ENCODE measurements at regions of chr6 and their contacts with region 1.

Region 1: GRCh38 chr6:38671885-38672467 is 31.0 kb downstream of the GLO1 start:
- DNase-seq: peak; percentile 55
- ATAC-seq: peak; percentile 91
- H3K4me3 ChIP-seq: no peak overlapping the region
- H3K27ac ChIP-seq: no peak overlapping the region
- H3K4me1 ChIP-seq: peaks cover 18% of the 10 kb centered on the region
- H3K27me3 ChIP-seq: no peaks in the 10 kb centered on the region
- CTCF ChIP-seq: peak; percentile 70 to 84 (median 81)
- EP300 ChIP-seq: no peak
- POLR2A ChIP-seq: no peak
- RAD21 ChIP-seq: peak; percentile 86

Region 2: DNA sequence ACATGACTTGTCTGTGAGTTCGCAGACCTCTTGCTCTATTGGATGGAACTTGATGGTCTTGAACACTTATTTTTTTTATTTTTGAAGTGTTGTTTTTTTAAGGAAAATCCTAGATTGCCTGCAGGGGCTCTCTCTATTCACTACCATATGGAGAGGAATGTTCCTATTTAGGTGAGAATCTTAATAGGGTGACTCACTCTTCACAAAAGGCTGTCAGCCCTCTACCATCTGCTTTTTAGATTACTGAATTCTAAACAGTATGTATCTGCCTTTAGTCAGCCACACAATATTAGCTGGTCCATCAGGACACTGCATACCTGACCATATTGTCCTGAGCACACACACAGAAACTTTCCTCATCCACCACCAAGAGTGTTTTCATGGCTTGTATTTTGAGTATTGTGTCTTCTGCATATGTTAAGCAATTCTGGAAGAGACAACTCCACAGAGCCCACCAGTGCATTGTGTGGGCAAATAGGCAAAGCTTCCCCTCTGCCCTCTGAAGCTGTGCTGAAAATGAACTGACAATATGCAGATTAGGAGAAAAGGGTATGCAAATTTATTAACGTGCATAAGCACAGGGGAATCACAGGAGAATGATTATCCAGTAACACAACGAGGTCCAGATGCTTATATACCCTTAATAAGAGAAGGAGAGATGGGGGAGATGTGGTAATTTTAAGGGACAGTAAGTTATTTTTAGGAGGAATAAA is 25.7 kb before region 1 on chr6:
- CTCF ChIA-PET with region 1: no interaction called
- POLR2A ChIA-PET with region 1: no interaction called
- RAD21 ChIA-PET with region 1: no interaction called
- SMC1A ChIA-PET with region 1: no interaction called
- in situ Hi-C with region 1: no loop called
- intact Hi-C with region 1: no loop called
- DNase-seq: no peak
- ATAC-seq: no peak
- H3K4me3 ChIP-seq: no peak overlapping the region
- H3K27ac ChIP-seq: no peak overlapping the region
- H3K4me1 ChIP-seq: no peaks in the 10 kb centered on the region
- H3K27me3 ChIP-seq: no peaks in the 10 kb centered on the region
- CTCF ChIP-seq: no peak
- EP300 ChIP-seq: no peak
- POLR2A ChIP-seq: no peak
- RAD21 ChIP-seq: no peak

Region 3: GRCh38 chr6:38688579-38689087 is 16.7 kb after region 1 on chr6:
- CTCF ChIA-PET with region 1: interaction called, 8 read pairs
- POLR2A ChIA-PET with region 1: interaction called, 5 read pairs
- RAD21 ChIA-PET with region 1: interaction called, 10 read pairs
- SMC1A ChIA-PET with region 1: interaction called, 14 read pairs
- in situ Hi-C with region 1: no loop called
- intact Hi-C with region 1: no loop called
- DNase-seq: peak; percentile 59
- ATAC-seq: peak; percentile 96
- H3K4me3 ChIP-seq: peak overlapping the region; percentile 28; the same call in 1 of the 2 replicates
- H3K27ac ChIP-seq: peak overlapping the region; percentile 65
- H3K4me1 ChIP-seq: peaks cover 13% of the 10 kb centered on the region
- H3K27me3 ChIP-seq: no peaks in the 10 kb centered on the region
- CTCF ChIP-seq: peak in 2 of 3 experiments; percentile 12 to 18; a peak in 2 of 6 replicates
- EP300 ChIP-seq: no peak
- POLR2A ChIP-seq: no peak
- RAD21 ChIP-seq: no peak